Activated CD4-positive, alpha-beta T cell treated with anti-CD3 and anti-CD28 coated beads, Interleukin-2, amount 10 ng/mL, durations not matched to agents 24 days and 14 days (primary cell): ENCODE measurements at regions of chr16 and their contacts with region 1.

Region 1: DNA sequence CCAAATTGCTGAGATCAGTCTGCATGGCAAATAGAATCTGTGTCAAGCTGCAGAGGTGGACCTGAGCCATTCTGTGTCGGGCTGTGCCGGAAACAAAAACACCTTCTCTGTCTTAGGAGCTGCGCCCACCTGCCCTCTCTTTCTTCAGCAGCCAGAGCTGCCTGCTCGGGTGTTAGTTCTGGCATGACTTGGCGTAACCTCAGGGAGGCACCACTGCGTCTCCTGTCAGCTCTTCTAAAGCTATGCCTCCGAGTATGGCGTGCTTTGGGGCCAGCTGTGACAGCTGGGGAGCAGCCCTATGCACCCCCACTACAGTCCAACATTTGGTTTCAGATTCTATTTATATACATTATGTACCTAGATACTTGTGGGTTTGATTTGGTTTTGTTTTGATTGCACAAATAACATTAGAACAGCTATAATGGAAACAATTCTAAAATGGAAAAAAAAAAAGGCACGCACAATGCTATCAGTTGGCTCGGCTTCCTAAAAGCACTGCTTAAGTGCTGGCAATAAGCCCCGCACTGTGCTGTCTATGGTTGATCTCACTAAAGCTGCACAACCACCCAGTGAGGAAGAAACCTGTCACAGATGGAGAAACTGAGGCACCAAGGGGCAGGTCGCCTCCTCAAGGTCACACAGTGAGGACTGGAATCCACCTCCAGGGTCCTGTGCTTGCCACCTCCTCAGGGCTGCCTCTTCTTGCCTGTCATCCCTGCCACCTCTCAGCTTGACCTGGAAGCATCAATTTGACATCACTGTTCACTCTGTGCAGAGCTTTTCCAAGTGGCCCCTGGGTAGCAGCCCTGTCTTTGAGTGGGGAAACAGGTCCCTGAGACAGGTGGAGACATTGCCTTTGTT is 18.7 kb upstream of the ADGRG1 start:
- DNase-seq: peak; percentile 92
- H3K4me3 Mint-ChIP-seq: peak overlapping the region; percentile 71
- H3K27ac Mint-ChIP-seq: peak overlapping the region; percentile 98
- H3K4me1 Mint-ChIP-seq: peaks cover 45% of the 10 kb centered on the region
- H3K27me3 Mint-ChIP-seq: no peaks in the 10 kb centered on the region

Region 2: GRCh38 chr16:56481468-56482112 is 1128.2 kb before region 1 on chr16:
- intact Hi-C with region 1: no loop called
- DNase-seq: no peak
- H3K4me3 Mint-ChIP-seq: no peak overlapping the region
- H3K27ac Mint-ChIP-seq: no peak overlapping the region
- H3K4me1 Mint-ChIP-seq: peaks cover 9% of the 10 kb centered on the region
- H3K27me3 Mint-ChIP-seq: no peaks in the 10 kb centered on the region

Region 3: DNA sequence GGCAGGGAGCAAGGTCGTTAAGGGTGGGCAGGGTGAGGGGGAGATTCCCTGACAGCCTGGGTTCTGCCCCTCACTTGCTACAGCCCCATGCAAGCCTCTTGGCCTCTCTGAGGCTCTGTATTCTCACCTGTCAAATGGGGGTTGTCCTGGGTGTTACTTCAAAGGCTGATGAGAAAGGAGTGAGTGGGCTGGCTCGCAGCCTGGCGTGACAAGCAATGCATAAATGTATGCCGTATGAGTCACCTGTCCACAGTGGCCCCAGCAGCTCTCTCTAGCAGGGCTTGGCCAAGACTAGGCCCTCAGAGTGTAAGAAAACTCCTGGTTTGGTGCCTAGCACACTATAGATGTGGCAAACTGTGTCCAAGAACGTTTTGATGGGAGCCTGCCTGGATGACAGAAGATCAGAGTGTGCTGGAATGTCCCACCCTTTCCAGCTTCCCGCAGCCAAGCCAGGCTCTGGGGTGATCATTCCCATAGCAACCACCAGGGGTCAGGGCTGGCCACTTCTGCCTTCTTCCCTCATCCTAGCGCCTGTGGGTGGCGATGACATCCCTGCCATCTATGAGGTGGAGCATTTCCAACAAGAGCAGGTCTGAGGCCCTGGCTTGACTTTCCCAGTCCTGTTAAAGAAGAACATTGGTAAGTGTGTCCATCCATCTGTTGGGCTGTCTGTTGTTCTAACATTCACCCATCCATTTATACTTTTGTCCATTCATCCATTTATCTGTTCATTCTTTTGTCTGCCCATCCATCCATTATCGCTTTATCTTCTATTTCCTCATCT is 18.5 kb before region 1 on chr16:
- intact Hi-C with region 1: loop called (anchors 1 kb)
- DNase-seq: peak; percentile 90
- H3K4me3 Mint-ChIP-seq: peak overlapping the region; percentile 79
- H3K27ac Mint-ChIP-seq: peak overlapping the region; percentile 94
- H3K4me1 Mint-ChIP-seq: peaks cover 37% of the 10 kb centered on the region
- H3K27me3 Mint-ChIP-seq: no peaks in the 10 kb centered on the region

Region 4: DNA sequence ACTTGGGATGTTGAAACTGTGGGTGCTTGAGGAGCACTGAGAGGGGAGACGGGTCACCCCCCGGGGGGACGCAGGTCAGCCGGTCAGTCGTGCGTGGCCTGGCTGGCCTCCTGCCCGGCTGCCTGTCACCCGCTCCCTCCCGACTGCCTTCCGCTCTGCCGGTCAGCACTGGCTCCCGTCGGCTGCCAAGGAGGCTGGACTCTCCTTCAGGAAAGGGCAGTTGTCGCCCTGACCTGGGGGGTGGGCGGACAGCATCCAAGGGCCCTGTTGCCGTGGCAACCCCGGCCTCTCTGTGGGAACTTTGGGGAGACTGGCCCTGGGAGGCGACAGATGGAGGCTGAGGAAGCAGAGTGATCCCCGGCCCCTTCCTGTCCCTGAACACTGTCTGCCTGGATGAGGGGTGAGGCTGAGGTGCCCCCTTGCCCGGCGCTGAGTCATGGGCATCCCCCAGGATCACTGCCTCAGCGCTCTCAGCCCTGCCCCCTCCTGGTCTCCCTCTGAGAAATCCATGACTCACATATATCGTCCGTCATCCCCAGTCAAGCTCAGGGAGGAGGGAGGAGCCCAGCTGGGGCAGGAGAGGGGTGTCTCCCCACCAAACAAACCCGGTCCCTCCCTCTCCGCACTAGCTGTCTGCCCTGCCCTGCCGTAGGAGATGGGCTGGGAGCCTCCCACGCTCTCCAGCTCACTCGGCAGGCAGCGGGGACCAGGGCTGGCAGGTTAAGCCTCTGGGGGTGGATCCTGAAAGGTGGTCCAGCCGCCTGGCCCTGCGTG is 18.4 kb after region 1 on chr16 and contains the start of gene ADGRG1:
- intact Hi-C with region 1: loop called (anchors 2 kb)
- DNase-seq: peak; percentile 81
- H3K4me3 Mint-ChIP-seq: peak within 1 kb of the TSS; percentile 72
- H3K27ac Mint-ChIP-seq: peak within 1 kb of the TSS; percentile 75
- H3K4me1 Mint-ChIP-seq: peaks cover 16% of the 10 kb centered on the region
- H3K27me3 Mint-ChIP-seq: peaks cover 24% of the 10 kb centered on the region
- total RNA-seq, gene ADGRG1: 3.8 and 4.8 TPM in 2 replicates

Region 5: DNA sequence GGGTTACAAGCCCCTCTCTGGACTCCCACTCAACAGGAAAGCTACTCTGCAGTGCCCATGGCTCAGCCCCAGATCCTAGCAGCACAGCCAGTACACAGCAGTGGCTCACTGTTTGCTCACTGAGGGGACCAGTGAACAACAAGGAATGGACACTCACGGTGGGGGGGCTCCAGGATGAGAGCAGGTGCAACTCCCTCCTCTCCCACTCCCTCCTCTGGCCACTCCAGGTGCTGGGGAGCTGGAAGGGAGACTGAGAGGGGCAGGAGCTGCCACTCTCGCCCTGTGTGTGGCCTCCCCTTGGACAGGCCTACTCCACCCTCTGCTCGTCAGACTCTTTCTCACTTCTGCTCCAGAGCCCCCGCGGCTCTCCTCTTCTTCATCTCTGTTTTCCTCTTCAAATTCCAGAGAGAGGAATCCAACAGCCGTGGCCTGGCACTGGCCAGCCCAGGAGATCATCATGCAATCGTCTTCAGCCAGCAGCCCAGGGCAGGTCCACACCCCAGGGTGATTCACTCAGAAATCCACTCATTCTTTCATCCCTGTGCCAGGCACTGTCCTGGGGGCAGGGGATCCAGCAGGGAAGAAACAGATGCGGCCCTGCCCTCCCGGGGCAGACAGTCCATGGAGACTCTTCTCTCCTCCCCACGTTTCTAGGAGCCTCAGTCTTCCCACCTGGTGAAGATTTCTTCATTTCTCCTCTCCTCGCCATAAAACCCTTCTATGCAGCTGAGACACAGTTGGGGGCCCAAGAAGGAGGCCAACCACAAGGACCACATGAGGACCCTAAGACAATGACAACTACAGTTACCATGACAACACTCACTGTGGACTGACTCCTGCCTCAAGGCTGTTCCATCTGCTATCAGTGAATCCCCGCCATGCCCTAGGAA is 488.7 kb after region 1 on chr16:
- intact Hi-C with region 1: no loop called
- DNase-seq: no peak
- H3K4me3 Mint-ChIP-seq: no peak overlapping the region
- H3K27ac Mint-ChIP-seq: no peak overlapping the region
- H3K4me1 Mint-ChIP-seq: peaks cover 10% of the 10 kb centered on the region
- H3K27me3 Mint-ChIP-seq: peaks cover 3% of the 10 kb centered on the region